B cell (primary cell): ENCODE measurements at regions of chr1 and their contacts with region 1.

Region 1: GRCh38 chr1:148372731-148373130 is 110.4 kb downstream of the PPIAL4G start:
- DNase-seq: no peak
- ATAC-seq: no peak
- H3K4me3 ChIP-seq: no peak overlapping the region
- H3K4me3 Mint-ChIP-seq: no peak overlapping the region
- H3K27ac ChIP-seq: peak overlapping the region in 1 of 2 donors; percentile 67
- H3K27ac Mint-ChIP-seq: peak overlapping the region; percentile 34
- H3K4me1 ChIP-seq: peaks cover 22 to 26% of the 10 kb centered on the region in 2 donors
- H3K4me1 Mint-ChIP-seq: peaks cover 22% of the 10 kb centered on the region
- H3K27me3 ChIP-seq: no peaks in the 10 kb centered on the region
- H3K27me3 Mint-ChIP-seq: no peaks in the 10 kb centered on the region
- CTCF ChIP-seq: no peak

Region 2: GRCh38 chr1:148388260-148389027 is 15.7 kb after region 1 on chr1:
- CTCF ChIA-PET with region 1: interaction called, 7 read pairs
- POLR2A ChIA-PET with region 1: interaction called, 14 read pairs
- intact Hi-C with region 1: no loop called
- DNase-seq: peak; percentile 93
- ATAC-seq: peak; percentile 77
- H3K4me3 ChIP-seq: peak overlapping the region; percentile 38 to 73 (median 63)
- H3K4me3 Mint-ChIP-seq: peak overlapping the region; percentile 99
- H3K27ac ChIP-seq: peak overlapping the region; percentile 90 to 98
- H3K27ac Mint-ChIP-seq: peak overlapping the region; percentile 100
- H3K4me1 ChIP-seq: peaks cover 31 to 33% of the 10 kb centered on the region in 2 donors
- H3K4me1 Mint-ChIP-seq: peaks cover 49% of the 10 kb centered on the region
- H3K27me3 ChIP-seq: no peaks in the 10 kb centered on the region
- H3K27me3 Mint-ChIP-seq: no peaks in the 10 kb centered on the region
- CTCF ChIP-seq: no peak